Right ventricle myocardium superior (tissue), 1 donor: ENCODE measurements at regions of chr17 and their contacts with region 1.

Region 1: GRCh38 chr17:59331129-59331928 is at the start of gene YPEL2:
- DNase-seq: peak; percentile 98
- ATAC-seq: peak; percentile 89
- total RNA-seq, gene YPEL2: 28.9 TPM

Region 2: DNA sequence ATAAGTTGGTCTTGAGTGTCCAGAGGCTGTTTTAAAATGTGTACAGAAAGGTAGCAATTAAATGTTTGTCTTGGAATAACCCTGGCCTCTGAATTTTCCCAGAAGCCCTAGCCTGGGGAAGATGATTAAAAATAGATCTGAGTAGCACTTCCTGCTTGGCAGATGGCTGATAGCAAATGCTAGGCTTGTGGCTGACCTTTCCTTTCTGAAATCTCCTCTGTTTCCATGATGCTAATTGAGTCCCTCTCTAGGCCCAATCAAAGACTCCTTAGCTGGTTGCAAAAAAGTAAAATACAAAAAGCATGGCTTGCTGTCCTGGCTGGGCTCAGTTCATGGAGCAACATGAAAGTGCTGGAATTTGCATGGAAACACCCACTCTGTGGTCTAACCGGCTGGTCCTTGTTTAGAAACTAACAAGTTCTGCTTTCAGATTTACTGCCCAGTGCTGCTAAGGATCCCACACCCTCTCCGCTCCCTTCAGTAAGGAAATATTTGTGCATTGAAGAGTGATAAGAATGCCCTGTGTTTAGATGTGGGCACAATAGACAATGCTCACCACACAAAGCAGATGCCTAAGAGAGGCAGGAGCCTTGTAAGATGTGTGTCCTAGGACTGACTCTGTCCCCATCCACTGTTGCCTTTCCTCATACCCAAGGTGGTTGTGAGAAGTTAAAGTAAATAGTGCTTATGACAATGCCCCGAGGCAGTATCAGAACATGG is 41.0 kb after region 1 on chr17:
- intact Hi-C with region 1: loop called (anchors 5 kb)
- DNase-seq: no peak
- ATAC-seq: peak; percentile 63

Region 3: GRCh38 chr17:59427425-59427921 is 96.1 kb after region 1 on chr17:
- intact Hi-C with region 1: loop called (anchors 2 kb)
- DNase-seq: no peak
- ATAC-seq: peak; percentile 36

Region 4: DNA sequence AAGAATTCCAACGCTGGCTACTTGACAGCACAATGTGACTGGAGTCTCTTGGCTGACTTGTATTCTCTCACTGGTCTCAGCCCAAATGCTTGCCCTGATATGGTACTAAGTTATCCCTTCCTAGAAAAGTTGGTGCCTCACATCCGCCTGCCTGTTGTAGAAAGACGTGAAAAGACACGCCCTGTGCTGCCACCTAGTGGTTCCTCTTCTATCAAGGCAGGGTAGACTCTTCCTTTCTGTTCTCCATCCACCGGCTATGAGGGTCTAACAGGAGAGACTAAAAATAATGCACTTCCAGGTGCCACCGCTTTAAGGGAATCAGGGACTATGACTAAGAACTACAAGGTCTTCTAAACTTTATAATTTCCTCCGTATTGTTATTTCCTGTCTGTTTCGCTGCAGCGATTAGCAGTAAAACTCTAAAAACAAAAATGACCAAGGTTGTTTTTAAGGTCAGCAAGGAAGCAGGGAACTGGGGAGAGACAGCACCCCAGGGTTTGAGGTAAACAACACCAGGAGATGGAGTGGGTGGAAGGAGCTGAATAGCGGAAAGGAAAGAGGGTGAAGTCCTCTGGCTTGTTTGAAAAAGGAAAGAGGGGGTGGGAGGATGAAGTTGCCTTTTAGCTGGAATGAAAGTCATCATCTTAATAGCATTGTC is 109.6 kb after region 1 on chr17:
- intact Hi-C with region 1: loop called (anchors 2 kb)
- DNase-seq: peak; percentile 89
- ATAC-seq: peak; percentile 93